Heart left ventricle (tissue), 16 donors: ENCODE measurements at regions of chr13 and their contacts with region 1.

Region 1: DNA sequence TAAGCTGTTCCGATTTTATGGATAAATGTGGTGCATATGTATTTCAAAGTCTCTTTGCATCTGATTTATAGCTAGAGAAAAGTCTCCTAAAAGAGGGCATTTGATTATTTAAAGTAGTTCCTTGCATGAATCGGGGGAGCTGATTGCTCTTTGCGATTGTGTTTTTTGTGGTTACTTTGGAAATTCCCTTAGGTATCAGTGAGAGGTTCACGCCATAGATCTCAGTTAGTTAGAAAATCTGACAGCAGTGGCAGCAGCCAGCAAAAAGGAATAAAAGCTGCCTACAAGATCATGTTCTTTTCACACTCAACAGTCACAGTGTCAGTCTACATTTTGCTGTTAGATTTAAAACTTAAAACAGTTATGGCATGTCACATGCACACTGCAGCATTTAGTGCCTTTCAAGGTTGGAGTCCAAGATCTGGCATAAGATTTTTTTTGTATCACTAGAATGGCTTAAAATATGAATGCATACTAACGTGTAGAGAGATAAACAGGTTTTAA is 436.5 kb upstream of the PCDH20 start:
- DNase-seq: no peak
- ATAC-seq: no peak
- H3K4me3 ChIP-seq: no peak overlapping the region
- H3K27ac ChIP-seq: no peak overlapping the region
- H3K4me1 ChIP-seq: no peaks in the 10 kb centered on the region
- H3K27me3 ChIP-seq: no peaks in the 10 kb centered on the region
- CTCF ChIP-seq: no peak
- POLR2A ChIP-seq: no peak

Region 2: GRCh38 chr13:61246351-61246750 is 605.8 kb before region 1 on chr13:
- intact Hi-C with region 1: no loop called
- DNase-seq: no peak
- ATAC-seq: no peak
- H3K4me3 ChIP-seq: no peak overlapping the region
- H3K27ac ChIP-seq: no peak overlapping the region
- H3K4me1 ChIP-seq: no peaks in the 10 kb centered on the region
- H3K27me3 ChIP-seq: no peaks in the 10 kb centered on the region
- CTCF ChIP-seq: no peak
- POLR2A ChIP-seq: no peak

Region 3: GRCh38 chr13:61898207-61898606 is 46.0 kb after region 1 on chr13:
- intact Hi-C with region 1: loop called in 1 of 10 experiments (anchors 5 kb)
- DNase-seq: no peak
- ATAC-seq: no peak
- H3K4me3 ChIP-seq: no peak overlapping the region
- H3K27ac ChIP-seq: no peak overlapping the region
- H3K4me1 ChIP-seq: no peaks in the 10 kb centered on the region
- H3K27me3 ChIP-seq: no peaks in the 10 kb centered on the region
- CTCF ChIP-seq: no peak
- POLR2A ChIP-seq: no peak